Common myeloid progenitor, CD34-positive (primary cell): ENCODE measurements at regions of chr19 and their contacts with region 1.

Region 1: GRCh38 chr19:17496337-17496997 is 15.0 kb upstream of the PGLS start:
- DNase-seq: peak; percentile 89 to 95 (median 92)
- H3K4me3 ChIP-seq: peak overlapping the region in 3 of 7 experiments; percentile 19 to 62 (median 56)
- H3K27ac ChIP-seq: no peak overlapping the region
- H3K4me1 ChIP-seq: peaks cover 0 to 28% (median 25%) of the 10 kb centered on the region in 4 experiments
- H3K27me3 ChIP-seq: no peaks in the 10 kb centered on the region

Region 2: GRCh38 chr19:17282488-17283255 is 213.8 kb before region 1 on chr19:
- CTCF ChIA-PET with region 1: no interaction called
- POLR2A ChIA-PET with region 1: no interaction called
- DNase-seq: peak; percentile 77 to 84 (median 82)
- H3K4me3 ChIP-seq: peak overlapping the region; percentile 19 to 74 (median 61)
- H3K27ac ChIP-seq: no peak overlapping the region
- H3K4me1 ChIP-seq: peaks cover 0 to 20% (median 18%) of the 10 kb centered on the region in 4 experiments
- H3K27me3 ChIP-seq: no peaks in the 10 kb centered on the region

Region 3: DNA sequence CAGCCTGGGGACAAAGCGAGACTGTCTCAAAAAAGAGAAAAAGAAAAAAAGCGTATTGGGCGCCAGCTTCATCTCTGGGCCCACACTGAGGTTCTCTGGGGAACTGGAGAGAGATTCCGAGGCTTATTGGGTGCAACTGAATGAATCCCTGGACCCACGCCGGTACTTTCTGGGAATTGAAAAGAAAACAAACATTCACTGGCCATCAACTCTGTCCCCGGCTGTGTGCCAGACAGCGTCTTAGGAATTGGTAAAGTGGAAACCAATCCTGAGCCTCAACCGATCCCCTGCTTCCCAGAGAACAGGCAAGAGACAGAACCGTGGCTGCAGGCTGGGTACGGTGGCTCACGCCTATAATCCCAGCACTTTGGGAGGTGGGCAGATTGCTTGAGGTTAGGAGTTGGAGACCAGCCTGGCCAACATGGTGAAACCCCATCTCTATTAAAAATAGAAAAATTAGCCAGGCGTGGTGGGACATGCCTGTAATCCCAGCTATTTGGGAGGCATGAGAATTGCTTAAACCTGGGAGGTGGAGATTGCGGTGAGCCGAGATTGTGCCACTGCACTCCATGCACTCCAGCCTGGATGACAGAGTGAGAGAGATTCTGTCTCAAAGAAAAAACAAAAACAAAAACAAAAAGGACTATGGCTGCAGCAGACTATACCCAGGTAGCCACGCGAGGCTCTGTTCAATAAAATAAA is 170.4 kb before region 1 on chr19:
- CTCF ChIA-PET with region 1: no interaction called
- POLR2A ChIA-PET with region 1: no interaction called
- DNase-seq: no peak
- H3K4me3 ChIP-seq: no peak overlapping the region
- H3K27ac ChIP-seq: no peak overlapping the region
- H3K4me1 ChIP-seq: peaks cover 0 to 26% (median 20%) of the 10 kb centered on the region in 4 experiments
- H3K27me3 ChIP-seq: peaks cover 0 to 12% (median 0%) of the 10 kb centered on the region in 5 experiments

Region 4: GRCh38 chr19:17406039-17406886 is 90.2 kb before region 1 on chr19:
- CTCF ChIA-PET with region 1: no interaction called
- POLR2A ChIA-PET with region 1: no interaction called
- DNase-seq: peak; percentile 54 to 86 (median 73)
- H3K4me3 ChIP-seq: peak overlapping the region in 6 of 7 experiments; percentile 63 to 79 (median 74)
- H3K27ac ChIP-seq: peak overlapping the region; percentile 64 to 81
- H3K4me1 ChIP-seq: peaks cover 11 to 49% (median 40%) of the 10 kb centered on the region in 4 experiments
- H3K27me3 ChIP-seq: no peaks in the 10 kb centered on the region

Region 5: DNA sequence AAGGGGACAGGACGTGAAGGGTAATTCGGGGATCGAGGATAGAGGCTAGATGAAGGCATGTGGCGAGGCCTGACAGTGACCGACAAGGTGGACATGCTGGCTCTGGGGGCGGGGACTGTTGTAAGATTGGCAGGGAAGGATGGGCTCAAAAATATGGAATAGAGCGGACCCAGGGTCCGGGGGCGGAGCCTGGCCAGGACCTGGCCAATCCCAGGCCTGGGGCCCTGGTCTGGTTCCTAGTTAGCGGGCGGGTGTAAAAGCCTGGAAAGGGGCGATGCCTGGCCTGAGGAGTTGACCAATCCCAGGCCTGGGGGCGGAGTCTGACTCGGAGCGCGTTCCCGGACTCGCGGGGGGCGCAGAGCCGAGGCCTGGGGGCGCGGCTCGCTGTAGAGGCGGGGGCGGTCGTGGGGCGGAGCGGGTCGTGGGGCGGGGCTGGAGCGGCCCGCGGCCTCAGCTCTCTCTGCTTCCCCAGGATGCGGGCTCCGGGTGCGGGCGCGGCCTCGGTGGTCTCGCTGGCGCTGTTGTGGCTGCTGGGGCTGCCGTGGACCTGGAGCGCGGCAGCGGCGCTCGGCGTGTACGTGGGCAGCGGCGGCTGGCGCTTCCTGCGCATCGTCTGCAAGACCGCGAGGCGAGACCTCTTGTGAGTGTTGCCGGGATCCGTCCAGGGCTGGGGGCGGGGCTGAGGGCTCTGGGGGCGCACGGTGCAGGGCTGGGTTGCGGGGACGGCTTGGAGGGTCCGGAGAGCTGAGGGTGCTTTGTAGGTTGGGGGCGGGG is 26.2 kb before region 1 on chr19 and contains the start of gene SLC27A1:
- CTCF ChIA-PET with region 1: interaction called, 27 read pairs
- POLR2A ChIA-PET with region 1: no interaction called
- DNase-seq: peak; percentile 98 to 99 (median 99)
- H3K4me3 ChIP-seq: peak within 1 kb of the TSS; percentile 67 to 86 (median 77)
- H3K27ac ChIP-seq: peak within 1 kb of the TSS in 1 of 2 experiments; percentile 68
- H3K4me1 ChIP-seq: peaks cover 0 to 51% (median 33%) of the 10 kb centered on the region in 4 experiments
- H3K27me3 ChIP-seq: no peaks in the 10 kb centered on the region

Region 6: GRCh38 chr19:17475541-17476115 is 20.8 kb before region 1 on chr19:
- CTCF ChIA-PET with region 1: interaction called, 27 read pairs
- POLR2A ChIA-PET with region 1: no interaction called
- DNase-seq: no peak
- H3K4me3 ChIP-seq: peak overlapping the region in 1 of 7 experiments; percentile 19
- H3K27ac ChIP-seq: no peak overlapping the region
- H3K4me1 ChIP-seq: peaks cover 0 to 33% (median 25%) of the 10 kb centered on the region in 4 experiments
- H3K27me3 ChIP-seq: no peaks in the 10 kb centered on the region

Region 7: DNA sequence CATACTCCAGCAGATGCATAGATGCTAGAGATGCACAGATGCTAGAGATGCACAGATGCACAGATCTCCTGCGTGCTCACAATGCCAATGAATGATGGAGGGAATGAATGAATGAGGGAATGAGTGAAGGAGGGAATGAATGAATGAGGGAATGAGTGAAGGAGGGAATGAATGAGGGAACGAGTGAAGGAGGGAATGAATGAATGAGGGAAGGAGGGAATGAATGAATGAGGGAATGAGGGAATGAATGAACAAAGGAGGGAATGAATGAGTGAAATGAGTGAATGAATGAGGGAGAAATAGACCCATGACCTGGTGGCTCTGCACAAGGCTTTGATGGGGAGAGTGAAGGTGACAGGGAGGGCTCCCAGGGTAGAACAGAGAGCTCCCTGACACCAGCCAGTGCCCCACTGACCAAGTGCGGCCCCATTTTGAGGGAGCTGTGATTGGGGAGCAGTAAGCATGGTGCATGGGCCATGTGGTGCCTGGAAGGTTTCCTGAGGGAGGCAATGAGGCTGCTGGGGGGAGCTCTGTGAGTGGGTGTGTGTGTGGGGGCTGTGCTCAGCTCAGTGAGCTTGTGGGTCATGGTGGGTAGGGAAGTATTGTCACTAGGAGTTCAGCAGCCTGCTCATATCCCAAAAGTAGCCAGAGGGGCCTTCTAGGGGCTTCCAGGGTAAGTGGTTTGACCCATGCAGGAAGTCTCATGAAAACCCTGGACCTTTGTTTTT is 13.4 kb before region 1 on chr19:
- CTCF ChIA-PET with region 1: interaction called, 18 read pairs
- POLR2A ChIA-PET with region 1: no interaction called
- DNase-seq: no peak
- H3K4me3 ChIP-seq: no peak overlapping the region
- H3K27ac ChIP-seq: no peak overlapping the region
- H3K4me1 ChIP-seq: peaks cover 0 to 17% (median 5%) of the 10 kb centered on the region in 4 experiments
- H3K27me3 ChIP-seq: no peaks in the 10 kb centered on the region

Region 8: GRCh38 chr19:17511724-17512573 is 15.5 kb after region 1 on chr19:
- CTCF ChIA-PET with region 1: interaction called, 19 read pairs
- POLR2A ChIA-PET with region 1: interaction called, 7 read pairs
- DNase-seq: peak; percentile 99
- H3K4me3 ChIP-seq: peak overlapping the region; percentile 76 to 93 (median 86)
- H3K27ac ChIP-seq: peak overlapping the region; percentile 80 to 91
- H3K4me1 ChIP-seq: peaks cover 6 to 30% (median 18%) of the 10 kb centered on the region in 4 experiments
- H3K27me3 ChIP-seq: no peaks in the 10 kb centered on the region

Region 9: DNA sequence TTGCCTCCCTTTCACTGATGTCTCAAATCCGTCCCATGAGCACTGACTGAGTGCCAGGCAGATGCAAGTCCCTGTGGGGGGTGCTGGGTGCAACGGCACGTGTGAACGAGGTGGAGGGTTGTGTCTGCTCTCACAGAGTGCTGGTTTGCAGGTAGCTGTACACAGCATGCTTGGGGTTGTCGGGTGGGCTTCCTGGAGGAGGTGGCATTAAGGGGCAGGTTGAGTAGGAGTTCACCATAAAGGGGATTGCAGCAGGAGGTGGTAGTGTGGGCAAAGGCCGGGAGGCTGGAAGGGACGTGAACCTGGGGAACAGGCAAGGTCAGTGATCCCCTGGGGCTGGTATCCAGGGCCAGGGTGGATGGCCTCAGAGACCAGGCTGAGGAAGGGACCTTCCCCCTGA is 76.2 kb after region 1 on chr19:
- CTCF ChIA-PET with region 1: interaction called, 16 read pairs
- POLR2A ChIA-PET with region 1: interaction called, 3 read pairs
- DNase-seq: no peak
- H3K4me3 ChIP-seq: no peak overlapping the region
- H3K27ac ChIP-seq: no peak overlapping the region
- H3K4me1 ChIP-seq: no peaks in the 10 kb centered on the region
- H3K27me3 ChIP-seq: no peaks in the 10 kb centered on the region

Region 10: GRCh38 chr19:17627921-17628320 is 131.5 kb after region 1 on chr19:
- CTCF ChIA-PET with region 1: no interaction called
- POLR2A ChIA-PET with region 1: no interaction called
- DNase-seq: no peak
- H3K4me3 ChIP-seq: no peak overlapping the region
- H3K27ac ChIP-seq: no peak overlapping the region
- H3K4me1 ChIP-seq: no peaks in the 10 kb centered on the region
- H3K27me3 ChIP-seq: peaks cover 0 to 1% (median 0%) of the 10 kb centered on the region in 5 experiments